ENCODE measurements at regions of chr6 and their contacts with region 1.

Region 1: DNA sequence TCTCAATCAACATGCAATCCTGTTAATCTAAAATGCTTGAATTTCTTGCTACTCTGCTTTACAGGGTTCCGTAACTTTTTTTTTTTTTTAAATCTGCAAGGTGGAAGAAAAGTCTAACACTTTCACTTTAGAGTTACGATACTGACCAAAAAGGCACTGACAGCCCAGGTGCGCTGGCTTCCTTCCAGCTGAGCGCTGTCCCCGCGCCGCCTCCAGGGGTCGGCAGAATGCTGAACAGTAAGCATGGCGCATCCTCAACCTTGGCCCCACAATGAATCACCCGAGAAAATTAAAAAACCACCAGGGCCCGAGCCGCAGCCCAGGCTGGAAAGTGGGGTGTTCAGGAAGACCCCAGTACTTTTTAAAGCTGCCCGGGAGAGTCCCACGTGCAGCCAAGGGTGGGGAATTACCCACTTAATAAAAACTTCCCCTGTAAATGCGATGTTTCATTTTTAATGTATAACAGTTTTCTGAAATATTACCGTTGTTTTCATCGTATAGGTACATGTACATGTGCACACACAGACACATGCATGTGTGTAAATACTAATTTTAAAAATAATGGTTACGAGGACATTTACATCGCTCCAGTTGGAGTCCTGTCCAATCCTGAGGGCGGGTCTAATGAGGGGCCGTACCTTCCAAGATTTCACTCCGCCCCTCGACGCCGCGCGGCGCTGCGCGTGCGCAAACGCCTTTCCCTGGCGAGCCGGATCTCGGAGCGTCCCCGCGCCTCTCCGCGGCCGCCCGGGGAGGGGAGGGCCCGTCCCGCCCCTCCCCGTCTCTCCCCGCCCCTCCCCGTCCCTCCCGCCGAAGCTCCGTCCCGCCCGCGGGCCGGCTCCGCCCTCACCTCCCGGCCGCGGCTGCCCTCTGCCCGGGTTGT is at the start of gene GINM1:
- DNase-seq: peak; percentile 94 to 97 (median 96)
- H3K4me3 ChIP-seq: peak within 1 kb of the TSS; percentile 61 to 94
- H3K4me3 Mint-ChIP-seq: peak within 1 kb of the TSS; percentile 94 to 98 (median 96)
- H3K27ac ChIP-seq: peak within 1 kb of the TSS; percentile 93
- H3K27ac Mint-ChIP-seq: peak within 1 kb of the TSS; percentile 96 to 99 (median 98)
- H3K4me1 ChIP-seq: peaks cover 25% of the 10 kb centered on the region
- H3K4me1 Mint-ChIP-seq: peaks cover 8 to 29% (median 15%) of the 10 kb centered on the region in 4 donors
- H3K27me3 ChIP-seq: no peaks in the 10 kb centered on the region
- H3K27me3 Mint-ChIP-seq: peaks cover 0 to 1% of the 10 kb centered on the region in 2 donors
- total RNA-seq, gene GINM1: 17.1 to 18.5 TPM

Region 2: DNA sequence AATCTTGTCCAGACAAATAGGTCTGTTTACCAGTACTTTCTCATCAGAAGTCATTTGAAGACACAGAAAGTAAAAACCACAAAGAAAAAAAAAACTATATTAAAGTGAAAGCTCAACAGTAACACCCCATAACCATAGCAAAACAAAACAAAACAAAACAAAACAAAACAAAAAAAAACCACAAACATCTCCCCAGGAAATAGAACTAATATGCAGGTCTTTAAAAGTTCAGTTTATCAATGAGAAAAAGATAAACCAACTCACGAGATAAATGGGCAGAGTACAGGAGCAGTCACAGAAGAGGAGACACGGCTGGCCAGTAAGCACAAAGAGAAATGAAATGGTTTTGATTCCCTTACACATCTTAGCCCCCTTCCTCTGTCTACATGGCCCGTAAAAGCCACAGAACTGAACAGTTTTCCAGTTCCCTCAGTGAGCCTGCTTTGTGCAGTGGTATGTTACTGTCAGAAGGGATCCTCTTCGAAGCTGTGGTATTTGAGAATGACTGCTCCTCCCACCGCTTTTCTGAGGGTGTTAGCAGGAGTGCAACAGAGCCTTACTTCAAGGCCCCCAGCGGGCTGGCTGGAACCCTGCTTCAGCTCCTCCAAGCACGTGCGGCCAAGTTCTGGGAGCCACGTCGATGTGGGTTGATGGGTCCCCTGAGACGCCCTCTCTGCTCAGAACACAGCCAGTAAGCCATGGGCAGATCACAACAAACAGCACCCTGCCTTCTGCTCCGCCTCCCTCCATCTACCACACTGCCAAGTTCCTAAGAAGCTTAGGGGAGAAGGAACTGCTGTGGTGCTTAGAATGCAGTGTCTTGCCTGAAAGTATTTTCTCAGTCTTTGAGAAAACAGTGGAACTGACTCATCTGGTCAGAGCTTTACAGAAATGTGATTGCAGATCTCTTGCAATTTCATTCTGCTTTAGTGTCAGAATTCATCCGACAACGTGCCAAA is 804.9 kb before region 1 on chr6:
- CTCF ChIA-PET with region 1: no interaction called
- POLR2A ChIA-PET with region 1: no interaction called
- intact Hi-C with region 1: loop called (anchors 5 kb)
- DNase-seq: peak; percentile 77 to 87 (median 84)
- H3K4me3 ChIP-seq: peak overlapping the region; percentile 20 to 42
- H3K4me3 Mint-ChIP-seq: peak overlapping the region; percentile 79 to 88 (median 84)
- H3K27ac ChIP-seq: peak overlapping the region; percentile 83
- H3K27ac Mint-ChIP-seq: peak overlapping the region; percentile 91 to 99 (median 96)
- H3K4me1 ChIP-seq: peaks cover 63% of the 10 kb centered on the region
- H3K4me1 Mint-ChIP-seq: peaks cover 67 to 94% (median 76%) of the 10 kb centered on the region in 4 donors
- H3K27me3 ChIP-seq: no peaks in the 10 kb centered on the region
- H3K27me3 Mint-ChIP-seq: no peaks in the 10 kb centered on the region

Region 3: DNA sequence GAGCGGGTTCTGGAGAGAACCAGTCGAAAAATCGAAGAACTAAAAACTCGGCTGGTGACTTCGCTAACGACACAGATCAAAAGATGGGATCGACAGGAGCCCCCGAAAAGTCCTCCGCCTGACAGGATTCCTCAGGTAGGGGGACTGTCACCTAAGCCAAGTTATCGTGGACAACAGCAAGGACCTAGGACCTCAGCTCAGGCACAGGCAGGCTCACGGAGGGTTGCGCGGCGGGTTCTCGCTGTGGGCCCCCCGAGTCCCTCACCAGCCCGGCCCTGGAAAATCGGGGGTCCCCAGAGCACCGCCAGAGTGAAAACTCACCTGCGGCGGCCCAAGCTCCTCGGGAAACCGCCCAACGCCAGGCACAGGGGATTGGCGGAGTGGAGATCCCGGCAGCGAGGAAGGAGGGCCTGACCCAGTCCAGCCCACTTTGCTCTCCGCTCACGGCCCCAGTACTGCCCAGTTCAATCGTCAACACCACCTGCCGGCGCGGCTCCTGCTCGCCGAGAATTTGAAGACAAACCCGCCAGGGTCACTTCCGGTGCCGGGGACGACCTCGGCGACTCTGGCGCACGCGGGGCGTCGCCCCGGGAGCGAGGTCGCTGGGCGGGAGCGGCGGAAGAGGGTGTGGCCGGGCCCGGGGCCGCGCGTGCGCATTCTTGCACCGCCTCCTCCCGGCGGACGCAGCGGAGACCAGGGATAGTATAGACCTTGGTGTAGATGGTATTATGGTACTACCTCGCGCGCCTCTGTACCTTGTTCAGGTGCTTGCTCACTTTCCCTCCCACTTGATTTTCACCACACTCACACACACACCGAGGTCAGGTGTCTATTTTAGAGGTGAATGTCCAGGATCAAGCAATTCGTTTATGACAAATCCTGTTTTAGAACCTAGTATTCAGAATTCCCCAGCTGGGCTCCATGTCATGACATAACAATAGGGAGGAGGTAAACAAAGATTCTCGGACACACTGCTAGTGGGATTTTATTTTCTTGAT is 82.7 kb after region 1 on chr6 and contains the start of gene KATNA1:
- CTCF ChIA-PET with region 1: no interaction called
- POLR2A ChIA-PET with region 1: interaction called, 5 read pairs
- intact Hi-C with region 1: loop called (anchors 1 kb)
- DNase-seq: peak; percentile 83 to 87 (median 84)
- H3K4me3 ChIP-seq: peak within 1 kb of the TSS; percentile 61 to 84
- H3K4me3 Mint-ChIP-seq: peak within 1 kb of the TSS; percentile 82 to 94 (median 92)
- H3K27ac ChIP-seq: peak within 1 kb of the TSS; percentile 74
- H3K27ac Mint-ChIP-seq: peak within 1 kb of the TSS; percentile 85 to 95 (median 90)
- H3K4me1 ChIP-seq: peaks cover 35% of the 10 kb centered on the region
- H3K4me1 Mint-ChIP-seq: peaks cover 14 to 45% (median 25%) of the 10 kb centered on the region in 4 donors
- H3K27me3 ChIP-seq: no peaks in the 10 kb centered on the region
- H3K27me3 Mint-ChIP-seq: no peaks in the 10 kb centered on the region
- total RNA-seq, gene KATNA1: 18.2 to 21.4 TPM

Region 4: DNA sequence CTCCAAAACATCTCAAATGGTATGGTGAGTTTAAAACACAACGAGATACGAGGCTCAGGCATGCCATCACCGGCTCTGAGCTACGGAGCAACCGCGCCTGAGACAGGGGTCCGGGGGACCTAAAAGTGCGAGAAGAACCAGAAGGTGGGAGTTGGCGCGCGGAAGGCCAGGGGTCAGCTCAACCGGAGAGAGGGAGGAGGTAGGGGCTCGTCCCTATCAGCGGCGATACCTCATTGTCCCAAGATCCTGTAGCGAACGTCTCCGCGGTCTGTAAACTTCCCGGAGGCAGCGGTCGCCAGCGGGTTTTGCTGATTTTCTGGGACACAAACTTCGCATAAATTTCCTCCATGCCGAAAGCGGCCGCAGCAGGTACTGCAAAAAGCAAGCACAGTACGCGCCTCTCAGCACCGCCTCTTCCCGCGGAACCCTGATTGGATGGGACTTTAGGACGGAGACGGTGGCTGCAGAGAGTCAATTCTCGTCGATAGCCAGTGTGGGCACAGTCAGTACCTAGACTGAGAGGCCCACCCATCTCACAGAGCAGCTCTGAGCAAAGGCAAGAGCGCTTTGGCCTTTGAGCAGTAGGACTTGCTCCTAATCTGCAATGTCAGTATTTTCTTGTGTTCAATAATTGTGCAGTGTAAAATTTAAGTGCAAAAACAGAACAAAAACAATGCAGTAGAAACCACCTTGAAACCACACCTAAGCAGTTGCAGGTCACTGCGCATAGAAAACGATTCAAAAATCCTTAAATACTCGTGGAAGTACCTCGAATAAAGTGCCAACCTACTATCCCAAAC is 180.6 kb after region 1 on chr6 and contains the start of gene NUP43:
- CTCF ChIA-PET with region 1: no interaction called
- POLR2A ChIA-PET with region 1: interaction called, 3 read pairs
- intact Hi-C with region 1: loop called (anchors 1 kb)
- DNase-seq: peak; percentile 89 to 92 (median 89)
- H3K4me3 ChIP-seq: peak within 1 kb of the TSS; percentile 87 to 90
- H3K4me3 Mint-ChIP-seq: peak within 1 kb of the TSS; percentile 92 to 99 (median 97)
- H3K27ac ChIP-seq: peak within 1 kb of the TSS; percentile 78
- H3K27ac Mint-ChIP-seq: peak within 1 kb of the TSS; percentile 88 to 97 (median 94)
- H3K4me1 ChIP-seq: peaks cover 36% of the 10 kb centered on the region
- H3K4me1 Mint-ChIP-seq: peaks cover 18 to 47% (median 31%) of the 10 kb centered on the region in 4 donors
- H3K27me3 ChIP-seq: no peaks in the 10 kb centered on the region
- H3K27me3 Mint-ChIP-seq: no peaks in the 10 kb centered on the region
- total RNA-seq, gene NUP43: 56.0 to 58.3 TPM

Region 5: GRCh38 chr6:150016324-150017185 is 450.8 kb after region 1 on chr6:
- CTCF ChIA-PET with region 1: no interaction called
- POLR2A ChIA-PET with region 1: no interaction called
- intact Hi-C with region 1: loop called (anchors 2 kb)
- DNase-seq: peak; percentile 60 to 79 (median 72)
- H3K4me3 ChIP-seq: no peak overlapping the region
- H3K4me3 Mint-ChIP-seq: peak overlapping the region in 2 of 8 donors; percentile 13 to 26
- H3K27ac ChIP-seq: no peak overlapping the region
- H3K27ac Mint-ChIP-seq: peak overlapping the region in 3 of 7 donors; percentile 32 to 50 (median 47)
- H3K4me1 ChIP-seq: peaks cover 8% of the 10 kb centered on the region
- H3K4me1 Mint-ChIP-seq: peaks cover 8 to 28% (median 12%) of the 10 kb centered on the region in 4 donors
- H3K27me3 ChIP-seq: peaks cover 19% of the 10 kb centered on the region
- H3K27me3 Mint-ChIP-seq: peaks cover 52 to 66% of the 10 kb centered on the region in 2 donors

Measured in CD4-positive, alpha-beta memory T cell (primary cell).